MCF 10A (cell line): ENCODE measurements at regions of chr2 and their contacts with region 1.

Region 1: DNA sequence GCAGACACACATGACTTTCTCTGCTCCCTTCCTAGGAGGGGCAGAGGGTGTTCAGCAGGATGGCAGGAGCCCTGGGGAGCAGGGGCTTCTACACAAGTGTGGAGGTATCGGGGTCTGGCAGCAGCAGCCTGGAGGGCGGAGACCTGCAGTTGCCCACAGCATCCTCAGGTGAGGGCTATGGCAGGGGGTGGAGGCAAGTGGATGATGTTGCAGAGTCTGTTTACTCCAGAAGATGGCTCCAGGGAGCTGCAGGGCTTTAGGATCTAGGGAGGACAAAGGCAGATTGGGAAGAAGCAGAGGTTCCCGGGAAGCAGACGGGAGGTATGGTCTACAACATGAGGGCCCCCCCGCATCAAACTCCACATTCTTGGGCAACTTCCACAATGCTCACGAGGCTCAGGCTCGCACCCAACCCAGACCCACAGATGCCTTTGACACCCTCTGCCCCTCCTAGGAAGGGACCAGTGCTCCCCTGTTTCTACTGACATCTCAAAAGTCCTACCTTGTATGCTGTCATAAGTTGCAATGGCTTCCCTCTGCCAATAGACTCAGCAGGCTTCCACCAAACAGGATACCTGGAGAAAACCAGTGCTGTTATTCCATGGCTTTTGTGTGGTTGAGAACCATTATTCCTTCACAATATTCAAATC is 12.0 kb upstream of the ATP6V1C2 start:
- DNase-seq: peak; percentile 71
- H3K4me3 Mint-ChIP-seq: no peak overlapping the region
- H3K27ac Mint-ChIP-seq: no peak overlapping the region
- H3K4me1 Mint-ChIP-seq: peaks cover 7% of the 10 kb centered on the region
- H3K27me3 Mint-ChIP-seq: peaks cover 52% of the 10 kb centered on the region
- CTCF ChIP-seq: peak; percentile 53

Region 2: GRCh38 chr2:10733575-10733943 is 24.1 kb after region 1 on chr2:
- CTCF ChIA-PET with region 1: interaction called, 10 read pairs
- POLR2A ChIA-PET with region 1: no interaction called
- intact Hi-C with region 1: no loop called
- DNase-seq: no peak
- H3K4me3 Mint-ChIP-seq: no peak overlapping the region
- H3K27ac Mint-ChIP-seq: no peak overlapping the region
- H3K4me1 Mint-ChIP-seq: peaks cover 5% of the 10 kb centered on the region
- H3K27me3 Mint-ChIP-seq: no peaks in the 10 kb centered on the region
- CTCF ChIP-seq: no peak

Region 3: GRCh38 chr2:10765461-10765860 is 56.0 kb after region 1 on chr2:
- CTCF ChIA-PET with region 1: no interaction called
- POLR2A ChIA-PET with region 1: no interaction called
- intact Hi-C with region 1: no loop called
- DNase-seq: peak; percentile 31
- H3K4me3 Mint-ChIP-seq: no peak overlapping the region
- H3K27ac Mint-ChIP-seq: no peak overlapping the region
- H3K4me1 Mint-ChIP-seq: no peaks in the 10 kb centered on the region
- H3K27me3 Mint-ChIP-seq: no peaks in the 10 kb centered on the region
- CTCF ChIP-seq: no peak

Region 4: DNA sequence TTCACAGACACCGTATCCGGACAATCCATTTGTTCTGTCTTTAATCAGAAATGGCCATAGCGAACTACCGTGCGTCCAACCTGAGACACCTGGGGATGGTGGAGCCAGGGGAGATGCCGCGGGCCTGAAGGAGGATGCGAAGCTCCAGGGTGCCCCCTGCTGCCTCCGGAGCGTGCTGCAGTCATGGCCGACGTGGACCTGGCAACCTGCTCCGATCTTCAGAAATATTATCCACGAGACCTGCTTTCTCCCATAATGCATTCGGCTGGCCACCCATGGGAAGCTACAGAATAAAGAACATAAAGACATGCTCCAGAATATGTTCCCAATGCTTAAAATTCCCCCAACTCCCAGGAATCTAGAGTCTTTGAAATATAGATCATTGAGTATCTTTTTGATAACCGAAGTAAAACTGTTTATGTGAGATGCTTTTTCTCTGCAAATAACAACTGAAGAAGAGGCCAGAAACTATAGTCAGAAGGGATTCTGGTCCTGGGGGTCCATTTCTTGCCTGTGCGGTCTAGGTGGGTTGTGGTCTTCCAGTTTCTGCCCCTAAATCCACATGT is 415.2 kb after region 1 on chr2:
- CTCF ChIA-PET with region 1: interaction called, 3 read pairs
- POLR2A ChIA-PET with region 1: no interaction called
- intact Hi-C with region 1: loop called (anchors 10 kb)
- DNase-seq: peak; percentile 56
- H3K4me3 Mint-ChIP-seq: no peak overlapping the region
- H3K27ac Mint-ChIP-seq: no peak overlapping the region
- H3K4me1 Mint-ChIP-seq: no peaks in the 10 kb centered on the region
- H3K27me3 Mint-ChIP-seq: peaks cover 16% of the 10 kb centered on the region
- CTCF ChIP-seq: peak; percentile 92